Vagina (tissue), 2 donors: ENCODE measurements at regions of chr5 and their contacts with region 1.

Region 1: GRCh38 chr5:149227168-149227826 is 44.4 kb upstream of the AFAP1L1 start:
- DNase-seq: no peak
- H3K4me3 ChIP-seq: no peak overlapping the region
- H3K27ac ChIP-seq: no peak overlapping the region
- H3K4me1 ChIP-seq: peaks cover 7% of the 10 kb centered on the region
- H3K27me3 ChIP-seq: no peaks in the 10 kb centered on the region
- CTCF ChIP-seq: no peak
- POLR2A ChIP-seq: no peak

Region 2: GRCh38 chr5:149141224-149141956 is 85.9 kb before region 1 on chr5 and contains the start of gene ABLIM3:
- intact Hi-C with region 1: loop called (anchors 2 kb)
- DNase-seq: no peak
- H3K4me3 ChIP-seq: peak within 1 kb of the TSS; percentile 68 to 77
- H3K27ac ChIP-seq: peak within 1 kb of the TSS; percentile 45
- H3K4me1 ChIP-seq: peaks cover 39% of the 10 kb centered on the region
- H3K27me3 ChIP-seq: no peaks in the 10 kb centered on the region
- CTCF ChIP-seq: peak; percentile 58 to 92 (median 65)
- POLR2A ChIP-seq: no peak
- total RNA-seq, gene ABLIM3: 50.8 TPM

Region 3: GRCh38 chr5:149240354-149240998 is 13.2 kb after region 1 on chr5:
- intact Hi-C with region 1: no loop called
- DNase-seq: no peak
- H3K4me3 ChIP-seq: no peak overlapping the region
- H3K27ac ChIP-seq: no peak overlapping the region
- H3K4me1 ChIP-seq: no peaks in the 10 kb centered on the region
- H3K27me3 ChIP-seq: no peaks in the 10 kb centered on the region
- CTCF ChIP-seq: no peak
- POLR2A ChIP-seq: no peak